ENCODE measurements at regions of chr2 and their contacts with region 1.

Region 1: DNA sequence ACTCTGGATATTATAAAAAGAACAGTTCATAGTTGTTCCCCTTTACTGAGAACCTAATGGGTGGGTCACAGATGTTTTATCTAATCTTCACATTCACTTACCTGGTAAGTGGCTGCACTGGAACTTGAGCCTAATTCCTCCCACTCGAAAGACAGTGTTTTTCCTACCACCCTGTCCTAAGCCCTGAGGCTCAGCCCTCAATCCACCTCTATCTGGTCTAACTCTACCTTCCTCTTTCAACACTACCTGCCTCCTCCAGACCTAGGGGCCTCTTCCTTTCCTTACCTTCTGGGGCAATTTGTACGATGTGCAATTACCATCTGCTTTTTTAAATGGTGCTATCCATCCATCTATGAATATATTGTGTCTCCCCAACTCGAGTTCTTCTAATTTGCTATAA is 9.7 kb upstream of the KIF3C start:
- DNase-seq: no peak
- H3K4me3 ChIP-seq: no peak overlapping the region
- H3K4me3 Mint-ChIP-seq: peak overlapping the region in 2 of 7 donors; percentile 76 to 81
- H3K27ac ChIP-seq: no peak overlapping the region
- H3K27ac Mint-ChIP-seq: peak overlapping the region in 3 of 8 donors; percentile 6 to 89 (median 78)
- H3K4me1 ChIP-seq: no peaks in the 10 kb centered on the region
- H3K4me1 Mint-ChIP-seq: peaks cover 5 to 14% (median 10%) of the 10 kb centered on the region in 3 donors
- H3K27me3 ChIP-seq: no peaks in the 10 kb centered on the region
- H3K27me3 Mint-ChIP-seq: no peaks in the 10 kb centered on the region

Region 2: DNA sequence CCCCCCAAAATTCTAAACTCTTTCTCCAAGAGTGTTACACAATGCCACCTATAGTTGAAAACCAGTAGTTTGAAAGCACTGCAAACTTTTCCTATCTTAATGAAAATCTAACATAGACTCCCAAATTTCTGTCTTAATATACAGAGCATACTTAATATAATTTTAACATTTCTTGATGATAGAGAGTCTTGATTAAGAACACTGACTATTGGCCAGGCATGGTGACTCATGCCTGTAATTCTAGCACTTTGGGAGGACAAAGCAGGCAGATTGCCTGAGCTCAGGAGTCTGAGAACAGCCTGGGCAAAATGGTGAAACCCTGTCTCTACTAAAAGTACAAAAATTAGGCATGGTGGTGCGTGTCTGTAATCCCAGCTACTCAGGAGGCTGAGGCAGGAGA is 147.9 kb before region 1 on chr2:
- CTCF ChIA-PET with region 1: no interaction called
- POLR2A ChIA-PET with region 1: no interaction called
- DNase-seq: no peak
- H3K4me3 ChIP-seq: no peak overlapping the region
- H3K4me3 Mint-ChIP-seq: no peak overlapping the region
- H3K27ac ChIP-seq: no peak overlapping the region
- H3K27ac Mint-ChIP-seq: no peak overlapping the region
- H3K4me1 ChIP-seq: no peaks in the 10 kb centered on the region
- H3K4me1 Mint-ChIP-seq: peaks cover 9 to 27% (median 10%) of the 10 kb centered on the region in 3 donors
- H3K27me3 ChIP-seq: no peaks in the 10 kb centered on the region
- H3K27me3 Mint-ChIP-seq: no peaks in the 10 kb centered on the region

Region 3: GRCh38 chr2:26033818-26034636 is 42.1 kb after region 1 on chr2 and contains the start of gene RAB10:
- CTCF ChIA-PET with region 1: interaction called, 12 read pairs
- POLR2A ChIA-PET with region 1: no interaction called
- DNase-seq: peak; percentile 97 to 100 (median 99)
- H3K4me3 ChIP-seq: peak within 1 kb of the TSS; percentile 98
- H3K4me3 Mint-ChIP-seq: peak within 1 kb of the TSS; percentile 84 to 99 (median 96)
- H3K27ac ChIP-seq: peak within 1 kb of the TSS; percentile 92
- H3K27ac Mint-ChIP-seq: peak within 1 kb of the TSS; percentile 95 to 97 (median 96)
- H3K4me1 ChIP-seq: peaks cover 30% of the 10 kb centered on the region
- H3K4me1 Mint-ChIP-seq: peaks cover 38 to 50% (median 39%) of the 10 kb centered on the region in 3 donors
- H3K27me3 ChIP-seq: no peaks in the 10 kb centered on the region
- H3K27me3 Mint-ChIP-seq: no peaks in the 10 kb centered on the region
- total RNA-seq, gene RAB10: 155 to 167 TPM

Region 4: GRCh38 chr2:26144953-26145680 is 153.2 kb after region 1 on chr2:
- CTCF ChIA-PET with region 1: interaction called, 10 read pairs
- POLR2A ChIA-PET with region 1: no interaction called
- DNase-seq: peak; percentile 27 to 70 (median 42)
- H3K4me3 ChIP-seq: no peak overlapping the region
- H3K4me3 Mint-ChIP-seq: no peak overlapping the region
- H3K27ac ChIP-seq: no peak overlapping the region
- H3K27ac Mint-ChIP-seq: no peak overlapping the region
- H3K4me1 ChIP-seq: no peaks in the 10 kb centered on the region
- H3K4me1 Mint-ChIP-seq: no peaks in the 10 kb centered on the region
- H3K27me3 ChIP-seq: peaks cover under 1% of the 10 kb centered on the region
- H3K27me3 Mint-ChIP-seq: peaks cover 3 to 12% of the 10 kb centered on the region in 2 donors

Region 5: GRCh38 chr2:26184555-26185303 is 192.8 kb after region 1 on chr2:
- CTCF ChIA-PET with region 1: interaction called, 22 read pairs
- POLR2A ChIA-PET with region 1: no interaction called
- DNase-seq: peak; percentile 76 to 89 (median 85)
- H3K4me3 ChIP-seq: peak overlapping the region; percentile 63
- H3K4me3 Mint-ChIP-seq: peak overlapping the region; percentile 82 to 93 (median 84)
- H3K27ac ChIP-seq: peak overlapping the region; percentile 57
- H3K27ac Mint-ChIP-seq: peak overlapping the region in 2 of 8 donors; percentile 46 to 59
- H3K4me1 ChIP-seq: peaks cover 8% of the 10 kb centered on the region
- H3K4me1 Mint-ChIP-seq: peaks cover 15 to 41% (median 35%) of the 10 kb centered on the region in 3 donors
- H3K27me3 ChIP-seq: no peaks in the 10 kb centered on the region
- H3K27me3 Mint-ChIP-seq: peaks cover 6 to 11% of the 10 kb centered on the region in 2 donors